CD4-positive, alpha-beta T cell (primary cell): ENCODE measurements at regions of chr9 and their contacts with region 1.

Region 1: DNA sequence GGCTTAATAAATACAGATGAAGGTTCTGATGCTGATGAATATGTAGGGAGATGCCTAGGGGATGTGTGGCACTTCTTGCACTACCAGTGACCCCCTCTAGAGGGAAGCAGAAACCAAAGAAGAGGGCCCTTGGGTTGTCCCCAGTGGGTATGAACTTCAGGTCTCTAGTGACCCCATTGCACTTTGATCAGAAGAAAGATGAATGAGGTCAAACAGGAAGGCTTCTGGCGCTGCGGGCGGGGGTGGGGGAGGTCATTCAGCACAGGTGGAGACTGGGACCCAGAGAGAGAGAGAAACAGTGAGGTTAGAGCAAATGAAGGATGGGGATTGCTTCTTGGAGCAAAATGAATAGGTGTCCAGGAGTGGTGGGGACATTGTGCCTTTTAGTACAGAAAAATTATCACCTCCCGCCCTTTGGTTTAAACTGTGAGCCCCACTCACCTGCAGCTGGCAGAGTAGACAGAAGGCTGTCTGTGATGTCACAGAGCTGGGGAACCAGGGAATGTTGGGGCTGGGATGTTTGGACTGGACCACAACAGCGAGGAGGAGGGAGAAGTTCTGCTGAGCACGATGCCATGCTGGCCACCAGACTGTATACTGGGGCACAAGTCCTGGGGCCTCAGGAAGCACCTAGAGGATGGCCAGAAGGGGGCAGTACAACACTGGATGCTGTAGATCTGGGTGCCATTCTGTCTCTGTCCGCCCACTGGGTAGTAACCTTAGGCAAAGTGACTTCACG is at the start of gene TEX48:
- DNase-seq: peak; percentile 55 to 91 (median 70)
- ATAC-seq: peak; percentile 83
- H3K4me3 ChIP-seq: no peak within 1 kb of the TSS
- H3K4me3 Mint-ChIP-seq: no peak within 1 kb of the TSS
- H3K27ac ChIP-seq: no peak within 1 kb of the TSS
- H3K27ac Mint-ChIP-seq: no peak within 1 kb of the TSS
- H3K4me1 ChIP-seq: peaks cover 11% of the 10 kb centered on the region
- H3K4me1 Mint-ChIP-seq: peaks cover 11% of the 10 kb centered on the region
- H3K27me3 ChIP-seq: peaks cover 0 to 14% of the 10 kb centered on the region in 2 experiments
- H3K27me3 Mint-ChIP-seq: peaks cover 15% of the 10 kb centered on the region
- CTCF ChIP-seq: peak; percentile 74
- total RNA-seq, gene TEX48: not detected

Region 2: DNA sequence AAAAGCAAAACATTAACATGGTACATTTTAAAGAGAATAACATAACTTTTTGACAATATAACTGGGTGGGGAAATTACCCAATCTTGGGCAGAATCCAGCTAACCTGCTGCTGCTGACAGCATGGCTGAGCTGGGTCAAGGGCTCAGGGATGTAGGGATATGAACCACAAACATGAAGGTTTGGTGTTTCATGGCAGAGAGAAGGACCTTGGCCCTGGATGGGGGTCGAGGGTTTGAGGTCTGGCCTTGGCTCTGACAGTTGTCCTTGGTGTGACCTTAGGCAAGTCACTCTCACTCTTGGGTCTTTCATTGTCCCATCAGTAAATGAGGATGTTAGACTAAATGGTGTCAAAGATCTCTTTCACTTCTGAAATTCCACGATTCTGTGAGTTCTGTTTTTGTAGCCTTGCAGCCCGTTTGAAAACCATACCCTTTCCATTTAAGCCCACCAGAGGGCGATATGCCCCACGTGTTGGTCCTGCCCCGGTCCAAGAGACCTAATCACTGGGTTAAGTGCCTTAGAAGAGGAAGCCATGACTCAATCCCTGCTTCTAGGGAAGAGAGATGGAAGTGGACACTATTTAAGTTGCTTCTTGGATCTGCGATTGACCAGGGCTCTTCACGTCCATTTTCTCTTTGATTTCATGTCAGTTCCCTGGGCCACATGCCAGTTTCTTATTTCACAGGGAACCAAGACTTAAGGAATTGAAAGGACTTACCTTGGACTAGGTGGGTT is 57.0 kb after region 1 on chr9:
- CTCF ChIA-PET with region 1: interaction called, 9 read pairs
- POLR2A ChIA-PET with region 1: interaction called, 5 read pairs
- intact Hi-C with region 1: loop called (anchors 1 kb)
- DNase-seq: peak; percentile 53 to 89 (median 64)
- ATAC-seq: peak; percentile 88
- H3K4me3 ChIP-seq: no peak overlapping the region
- H3K4me3 Mint-ChIP-seq: peak overlapping the region; percentile 18
- H3K27ac ChIP-seq: no peak overlapping the region
- H3K27ac Mint-ChIP-seq: peak overlapping the region; percentile 85
- H3K4me1 ChIP-seq: peaks cover 40% of the 10 kb centered on the region
- H3K4me1 Mint-ChIP-seq: peaks cover 39% of the 10 kb centered on the region
- H3K27me3 ChIP-seq: no peaks in the 10 kb centered on the region
- H3K27me3 Mint-ChIP-seq: no peaks in the 10 kb centered on the region
- CTCF ChIP-seq: peak; percentile 88

Region 3: DNA sequence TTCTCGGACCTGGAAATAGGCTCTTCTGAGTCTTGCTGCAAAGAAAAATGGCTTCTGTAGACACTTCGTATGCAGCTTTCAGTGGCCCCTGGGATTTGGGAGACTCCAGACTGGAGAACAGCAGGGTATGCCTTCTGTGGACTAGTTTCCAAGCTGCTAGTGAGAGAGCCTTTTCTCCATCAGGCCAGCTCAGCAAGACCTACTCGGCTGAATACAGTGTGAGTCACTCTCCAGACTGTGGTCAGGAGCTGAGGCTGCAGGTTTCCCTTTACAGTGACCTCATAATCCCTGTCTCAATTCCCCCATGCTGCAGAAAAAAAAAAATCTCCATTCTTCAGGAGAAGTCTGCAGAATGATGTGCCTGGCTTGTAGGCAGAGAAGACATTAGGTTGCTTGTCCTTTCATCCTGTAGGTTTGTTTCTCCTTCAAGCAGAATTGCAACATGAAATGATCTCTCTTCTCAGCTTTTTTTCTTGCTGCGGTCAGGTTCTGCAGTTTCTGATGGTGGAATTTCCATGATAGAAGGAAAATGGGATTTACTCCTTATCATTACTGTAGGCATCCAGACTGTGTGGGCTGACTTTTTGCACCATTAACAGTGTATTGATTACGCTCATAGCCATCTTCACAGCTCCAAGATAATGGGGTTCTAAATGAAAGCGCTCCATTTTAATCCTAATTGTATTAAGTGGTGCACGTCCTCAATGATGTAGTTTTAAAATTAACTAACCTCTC is 326.9 kb after region 1 on chr9:
- CTCF ChIA-PET with region 1: interaction called, 11 read pairs
- POLR2A ChIA-PET with region 1: no interaction called
- intact Hi-C with region 1: no loop called
- DNase-seq: peak in 2 of 14 experiments; percentile 53 to 64
- ATAC-seq: no peak
- H3K4me3 ChIP-seq: no peak overlapping the region
- H3K4me3 Mint-ChIP-seq: no peak overlapping the region
- H3K27ac ChIP-seq: no peak overlapping the region
- H3K27ac Mint-ChIP-seq: no peak overlapping the region
- H3K4me1 ChIP-seq: peaks cover 25% of the 10 kb centered on the region
- H3K4me1 Mint-ChIP-seq: peaks cover 6% of the 10 kb centered on the region
- H3K27me3 ChIP-seq: no peaks in the 10 kb centered on the region
- H3K27me3 Mint-ChIP-seq: peaks cover 4% of the 10 kb centered on the region
- CTCF ChIP-seq: no peak

Region 4: DNA sequence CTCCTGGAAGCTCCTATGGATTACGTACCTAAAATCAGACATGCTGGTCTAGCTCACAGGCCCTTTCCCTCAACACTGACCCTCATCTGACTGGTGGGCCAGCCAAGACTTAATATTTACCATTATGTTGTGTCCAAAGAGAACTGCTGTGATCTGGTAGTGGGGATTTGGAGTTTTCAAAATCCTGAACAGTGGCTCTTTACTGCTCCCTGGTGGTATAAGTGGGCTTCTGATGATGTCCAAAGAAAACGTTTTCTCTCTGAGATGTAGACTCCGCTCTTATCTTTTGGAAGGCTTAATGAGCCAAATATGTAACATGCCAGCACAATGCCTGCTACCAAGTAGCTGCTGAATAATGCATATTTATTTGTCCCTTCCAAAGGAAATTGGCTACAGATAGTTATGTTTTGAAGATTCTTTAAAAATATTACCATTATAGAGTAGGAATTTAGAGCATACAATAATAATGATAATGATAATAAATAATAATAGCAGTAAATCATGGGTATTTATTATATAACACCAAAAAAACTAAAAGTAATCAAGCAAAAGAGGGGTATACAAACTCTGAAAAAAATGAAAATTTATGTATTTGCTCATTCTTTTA is 842.8 kb after region 1 on chr9:
- CTCF ChIA-PET with region 1: no interaction called
- POLR2A ChIA-PET with region 1: no interaction called
- intact Hi-C with region 1: loop called (anchors 1 to 5 kb)
- DNase-seq: peak in 4 of 14 experiments; percentile 11 to 47 (median 40)
- ATAC-seq: no peak
- H3K4me3 ChIP-seq: no peak overlapping the region
- H3K4me3 Mint-ChIP-seq: no peak overlapping the region
- H3K27ac ChIP-seq: no peak overlapping the region
- H3K27ac Mint-ChIP-seq: no peak overlapping the region
- H3K4me1 ChIP-seq: no peaks in the 10 kb centered on the region
- H3K4me1 Mint-ChIP-seq: no peaks in the 10 kb centered on the region
- H3K27me3 ChIP-seq: peaks cover 0 to 11% of the 10 kb centered on the region in 2 experiments
- H3K27me3 Mint-ChIP-seq: peaks cover 44% of the 10 kb centered on the region
- CTCF ChIP-seq: peak; percentile 33

Region 5: GRCh38 chr9:116661037-116661954 is 1979.5 kb after region 1 on chr9:
- CTCF ChIA-PET with region 1: no interaction called
- POLR2A ChIA-PET with region 1: no interaction called
- intact Hi-C with region 1: loop called (anchors 5 kb)
- DNase-seq: peak in 4 of 14 experiments; percentile 0 to 61 (median 45)
- ATAC-seq: no peak
- H3K4me3 ChIP-seq: no peak overlapping the region
- H3K4me3 Mint-ChIP-seq: no peak overlapping the region
- H3K27ac ChIP-seq: no peak overlapping the region
- H3K27ac Mint-ChIP-seq: no peak overlapping the region
- H3K4me1 ChIP-seq: no peaks in the 10 kb centered on the region
- H3K4me1 Mint-ChIP-seq: no peaks in the 10 kb centered on the region
- H3K27me3 ChIP-seq: no peaks in the 10 kb centered on the region
- H3K27me3 Mint-ChIP-seq: no peaks in the 10 kb centered on the region
- CTCF ChIP-seq: peak; percentile 59